Dorsolateral prefrontal cortex (tissue), 120 donors: ENCODE measurements at regions of chr1 and their contacts with region 1.

Region 1: DNA sequence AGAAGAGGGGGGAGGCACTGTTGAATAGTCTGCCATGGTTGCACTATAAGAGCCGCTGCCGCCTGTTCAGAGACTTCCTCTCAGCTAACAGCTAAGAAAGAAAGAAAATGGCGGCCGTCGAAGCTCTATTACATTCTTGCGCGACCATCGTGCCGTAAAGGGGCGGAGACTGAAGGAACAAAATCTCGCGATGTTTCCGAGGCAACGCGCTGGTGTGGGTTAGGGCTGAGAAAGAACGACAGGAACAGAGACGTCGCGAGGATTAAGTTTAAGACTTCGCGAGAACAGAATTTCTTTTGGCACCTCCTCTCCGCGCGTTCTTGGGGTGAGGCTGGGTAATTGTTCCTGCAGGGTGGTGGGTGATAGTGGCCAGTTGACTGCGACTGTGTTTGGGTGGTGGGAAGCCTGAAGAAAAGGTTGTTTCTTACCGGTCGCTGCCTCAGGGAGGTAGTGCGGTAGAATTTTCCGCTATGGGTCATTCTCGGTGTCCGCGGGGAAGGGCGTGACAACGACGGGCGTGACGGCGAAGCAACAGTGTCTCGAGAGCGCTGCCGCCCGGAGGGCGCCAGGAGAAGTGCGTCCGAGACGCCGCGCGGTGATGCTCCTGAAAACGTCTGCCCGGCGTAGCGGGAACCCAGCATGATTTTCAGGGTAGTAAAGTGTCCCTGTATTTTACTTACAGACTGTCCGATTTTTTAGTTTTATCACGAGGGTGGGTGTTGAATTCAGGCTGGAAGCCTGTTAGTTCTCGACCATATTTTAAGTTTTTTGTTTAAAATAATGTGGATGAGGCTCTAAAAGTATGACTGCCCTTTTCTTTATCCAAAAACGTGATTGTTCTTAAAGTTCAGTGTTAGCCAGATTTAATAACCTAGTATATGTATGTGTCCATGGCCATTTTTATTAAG is at the start of gene FUBP1:
- DNase-seq: peak; percentile 75 to 96 (median 90)
- H3K4me3 ChIP-seq: peak within 1 kb of the TSS; percentile 55 to 100 (median 87)
- H3K27ac ChIP-seq: peak within 1 kb of the TSS; percentile 82 to 100 (median 98)
- H3K27me3 ChIP-seq: no peaks in the 10 kb centered on the region
- CTCF ChIP-seq: peak in 55 of 56 donors; percentile 40 to 83 (median 72)
- total RNA-seq, gene FUBP1: 83.6 to 178 (median 133) TPM

Region 2: DNA sequence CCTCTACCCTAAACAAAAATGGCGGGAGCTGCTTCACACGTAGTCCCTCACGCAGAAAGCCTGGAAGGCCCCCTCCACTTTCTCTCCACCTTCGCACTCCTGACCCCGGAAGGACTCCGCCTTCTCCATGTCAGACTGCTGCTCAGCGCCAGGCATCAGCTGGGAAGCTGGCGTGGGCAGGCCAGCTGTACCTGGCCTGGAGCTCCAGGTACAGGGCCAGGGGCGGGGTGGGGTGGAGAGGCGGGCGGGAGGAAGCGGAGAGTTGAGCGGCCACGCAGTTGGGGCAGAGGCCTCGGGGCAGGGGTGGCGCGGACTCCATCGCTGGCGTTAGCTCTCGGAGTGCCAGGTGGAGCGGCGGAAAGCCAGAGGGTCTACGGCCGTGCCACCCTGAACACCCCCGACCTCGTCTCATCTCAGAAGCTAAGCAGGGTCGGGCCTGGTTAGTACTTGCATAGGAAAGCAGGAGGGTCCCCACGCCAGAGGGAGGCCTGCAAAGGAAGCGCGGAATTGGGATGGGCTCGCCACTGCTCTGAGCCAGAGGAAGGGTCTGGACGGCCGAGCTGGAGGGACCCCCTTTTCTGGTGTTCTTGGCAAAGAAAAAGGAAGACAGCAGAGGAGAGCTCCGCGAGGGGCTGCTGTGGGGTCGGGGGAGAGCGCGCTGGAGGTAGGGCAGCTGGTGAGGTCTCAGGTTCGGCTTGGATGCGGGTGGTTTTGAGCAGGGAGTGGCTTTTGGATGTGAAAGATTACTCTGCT is 199.5 kb before region 1 on chr1 and contains the start of gene MIGA1:
- intact Hi-C with region 1: loop called in 1 of 2 experiments (anchors 10 kb)
- DNase-seq: peak; percentile 84 to 96 (median 94)
- H3K4me3 ChIP-seq: peak within 1 kb of the TSS; percentile 77 to 98 (median 89)
- H3K27ac ChIP-seq: peak within 1 kb of the TSS in 57 of 59 donors; percentile 5 to 91 (median 77)
- H3K27me3 ChIP-seq: no peaks in the 10 kb centered on the region
- CTCF ChIP-seq: peak in 20 of 56 donors; percentile 10 to 52 (median 22)
- total RNA-seq, gene MIGA1: 33.7 to 74.8 (median 59.0) TPM

Region 3: GRCh38 chr1:78004719-78005447 is 25.7 kb after region 1 on chr1 and contains the start of gene DNAJB4:
- intact Hi-C with region 1: loop called (anchors 1 kb)
- DNase-seq: peak in 7 of 10 donors; percentile 47 to 87 (median 51)
- H3K4me3 ChIP-seq: peak within 1 kb of the TSS; percentile 44 to 85 (median 72)
- H3K27ac ChIP-seq: peak within 1 kb of the TSS; percentile 58 to 98 (median 94)
- H3K27me3 ChIP-seq: no peaks in the 10 kb centered on the region
- CTCF ChIP-seq: peak in 15 of 56 donors; percentile 4 to 31 (median 16)
- total RNA-seq, gene DNAJB4: 41.3 to 218 (median 75.1) TPM

Region 4: GRCh38 chr1:78114034-78114956 is 135.1 kb after region 1 on chr1:
- intact Hi-C with region 1: loop called (anchors 5 kb)
- DNase-seq: peak in 6 of 10 donors; percentile 15 to 57 (median 48)
- H3K4me3 ChIP-seq: peak overlapping the region in 3 of 59 donors; percentile 10 to 23 (median 10)
- H3K27ac ChIP-seq: peak overlapping the region in 12 of 59 donors; percentile 9 to 66 (median 35)
- H3K27me3 ChIP-seq: no peaks in the 10 kb centered on the region
- CTCF ChIP-seq: peak; percentile 77 to 99 (median 94)

Region 5: GRCh38 chr1:78263459-78263858 is 284.2 kb after region 1 on chr1:
- intact Hi-C with region 1: no loop called
- DNase-seq: no peak
- H3K4me3 ChIP-seq: no peak overlapping the region
- H3K27ac ChIP-seq: no peak overlapping the region
- H3K27me3 ChIP-seq: no peaks in the 10 kb centered on the region
- CTCF ChIP-seq: no peak